CD4-positive, alpha-beta T cell (primary cell): ENCODE measurements at regions of chr18 and their contacts with region 1.

Region 1: GRCh38 chr18:59899298-59900221 is at the start of gene PMAIP1:
- DNase-seq: peak; percentile 57 to 93 (median 78)
- ATAC-seq: peak; percentile 68
- H3K4me3 ChIP-seq: peak within 1 kb of the TSS; percentile 91
- H3K4me3 Mint-ChIP-seq: peak within 1 kb of the TSS; percentile 98
- H3K27ac ChIP-seq: peak within 1 kb of the TSS; percentile 78 to 87
- H3K27ac Mint-ChIP-seq: peak within 1 kb of the TSS; percentile 93
- H3K4me1 ChIP-seq: peaks cover 28% of the 10 kb centered on the region
- H3K4me1 Mint-ChIP-seq: peaks cover 40% of the 10 kb centered on the region
- H3K27me3 ChIP-seq: no peaks in the 10 kb centered on the region
- H3K27me3 Mint-ChIP-seq: no peaks in the 10 kb centered on the region
- CTCF ChIP-seq: no peak
- total RNA-seq, gene PMAIP1: 100 to 101 TPM

Region 2: DNA sequence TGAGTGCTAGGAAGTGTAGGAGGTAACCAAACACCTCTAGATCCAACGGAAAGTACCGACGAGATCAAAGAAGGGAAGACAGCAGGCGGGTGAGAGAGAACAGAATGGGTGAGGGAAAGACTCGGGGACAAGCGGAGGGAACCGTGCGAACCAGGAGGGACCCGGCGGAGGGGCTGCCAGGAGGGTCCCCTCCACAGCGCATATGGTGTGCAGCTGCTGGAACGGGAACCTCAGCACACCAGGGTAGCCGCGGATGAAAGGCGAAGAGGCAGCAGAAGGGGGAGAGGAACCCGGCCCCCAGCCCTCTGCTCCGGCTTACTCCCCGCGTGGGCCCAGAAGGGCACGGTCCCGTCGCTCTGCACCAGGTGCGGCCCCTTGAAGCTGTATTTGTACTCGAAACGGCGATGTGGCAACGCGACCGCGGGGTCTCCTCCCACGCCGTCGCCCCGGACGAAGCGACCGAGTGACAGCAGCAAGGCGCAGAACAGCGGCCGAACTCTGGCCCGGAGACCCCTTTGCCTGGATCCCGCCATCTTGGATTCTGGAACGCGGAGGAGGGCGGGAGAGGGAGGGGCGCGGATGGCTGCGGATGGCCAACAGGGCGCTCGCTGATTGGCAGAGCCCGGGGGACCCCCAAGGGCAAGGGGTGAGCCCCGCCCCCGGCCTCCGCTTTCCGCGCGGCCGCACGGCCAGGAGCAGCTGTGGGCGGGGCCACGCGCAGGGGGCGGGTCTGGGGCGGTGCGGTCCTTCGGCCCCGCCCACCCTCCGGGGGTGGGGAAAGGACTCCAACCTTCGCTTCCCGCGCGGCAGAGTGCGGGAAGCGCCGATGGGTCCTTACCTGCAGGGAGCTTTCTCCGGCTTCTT is 540.6 kb before region 1 on chr18 and contains the start of gene LMAN1:
- CTCF ChIA-PET with region 1: no interaction called
- POLR2A ChIA-PET with region 1: interaction called, 3 read pairs
- intact Hi-C with region 1: loop called in 1 of 2 experiments (anchors 10 kb)
- DNase-seq: peak; percentile 76 to 95 (median 88)
- ATAC-seq: peak; percentile 75
- H3K4me3 ChIP-seq: peak within 1 kb of the TSS; percentile 85
- H3K4me3 Mint-ChIP-seq: peak within 1 kb of the TSS; percentile 92
- H3K27ac ChIP-seq: peak within 1 kb of the TSS; percentile 83 to 92
- H3K27ac Mint-ChIP-seq: peak within 1 kb of the TSS; percentile 81
- H3K4me1 ChIP-seq: peaks cover 14% of the 10 kb centered on the region
- H3K4me1 Mint-ChIP-seq: peaks cover 46% of the 10 kb centered on the region
- H3K27me3 ChIP-seq: no peaks in the 10 kb centered on the region
- H3K27me3 Mint-ChIP-seq: no peaks in the 10 kb centered on the region
- CTCF ChIP-seq: no peak
- total RNA-seq, gene LMAN1: 23.9 to 26.1 TPM

Region 3: GRCh38 chr18:59846814-59847490 is 52.6 kb before region 1 on chr18:
- CTCF ChIA-PET with region 1: no interaction called
- POLR2A ChIA-PET with region 1: no interaction called
- intact Hi-C with region 1: no loop called
- DNase-seq: peak in 2 of 14 experiments; percentile 13 to 32
- ATAC-seq: no peak
- H3K4me3 ChIP-seq: no peak overlapping the region
- H3K4me3 Mint-ChIP-seq: no peak overlapping the region
- H3K27ac ChIP-seq: no peak overlapping the region
- H3K27ac Mint-ChIP-seq: no peak overlapping the region
- H3K4me1 ChIP-seq: peaks cover 5% of the 10 kb centered on the region
- H3K4me1 Mint-ChIP-seq: peaks cover 5% of the 10 kb centered on the region
- H3K27me3 ChIP-seq: no peaks in the 10 kb centered on the region
- H3K27me3 Mint-ChIP-seq: no peaks in the 10 kb centered on the region
- CTCF ChIP-seq: no peak

Region 4: GRCh38 chr18:59861963-59862819 is 37.4 kb before region 1 on chr18:
- CTCF ChIA-PET with region 1: no interaction called
- POLR2A ChIA-PET with region 1: no interaction called
- intact Hi-C with region 1: no loop called
- DNase-seq: no peak
- ATAC-seq: no peak
- H3K4me3 ChIP-seq: no peak overlapping the region
- H3K4me3 Mint-ChIP-seq: no peak overlapping the region
- H3K27ac ChIP-seq: no peak overlapping the region
- H3K27ac Mint-ChIP-seq: no peak overlapping the region
- H3K4me1 ChIP-seq: no peaks in the 10 kb centered on the region
- H3K4me1 Mint-ChIP-seq: no peaks in the 10 kb centered on the region
- H3K27me3 ChIP-seq: no peaks in the 10 kb centered on the region
- H3K27me3 Mint-ChIP-seq: no peaks in the 10 kb centered on the region
- CTCF ChIP-seq: no peak

Region 5: DNA sequence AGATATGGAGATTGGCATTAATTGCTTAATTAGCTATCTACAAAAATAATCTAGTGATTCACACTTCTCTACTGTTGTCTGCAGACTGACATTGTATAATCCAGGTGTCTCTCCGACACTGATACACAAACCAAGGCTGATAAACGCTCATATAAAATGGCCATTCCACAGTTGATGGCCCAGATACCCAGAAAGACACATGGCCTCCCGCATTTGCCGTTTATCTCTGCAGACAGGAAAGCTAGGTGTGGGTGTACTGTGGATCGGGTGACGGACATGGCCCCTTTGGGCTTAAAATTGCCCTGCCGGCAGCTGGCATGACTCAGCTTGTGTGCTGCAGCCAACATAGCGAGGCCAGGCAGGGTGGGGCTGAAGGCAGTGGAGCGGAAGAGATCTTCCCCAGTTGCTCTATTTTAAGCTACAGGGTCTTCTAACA is 18.8 kb after region 1 on chr18:
- CTCF ChIA-PET with region 1: no interaction called
- POLR2A ChIA-PET with region 1: no interaction called
- intact Hi-C with region 1: no loop called
- DNase-seq: peak in 2 of 14 experiments; percentile 20 to 34
- ATAC-seq: no peak
- H3K4me3 ChIP-seq: no peak overlapping the region
- H3K4me3 Mint-ChIP-seq: no peak overlapping the region
- H3K27ac ChIP-seq: no peak overlapping the region
- H3K27ac Mint-ChIP-seq: no peak overlapping the region
- H3K4me1 ChIP-seq: peaks cover 8% of the 10 kb centered on the region
- H3K4me1 Mint-ChIP-seq: peaks cover 12% of the 10 kb centered on the region
- H3K27me3 ChIP-seq: no peaks in the 10 kb centered on the region
- H3K27me3 Mint-ChIP-seq: no peaks in the 10 kb centered on the region
- CTCF ChIP-seq: no peak

Region 6: DNA sequence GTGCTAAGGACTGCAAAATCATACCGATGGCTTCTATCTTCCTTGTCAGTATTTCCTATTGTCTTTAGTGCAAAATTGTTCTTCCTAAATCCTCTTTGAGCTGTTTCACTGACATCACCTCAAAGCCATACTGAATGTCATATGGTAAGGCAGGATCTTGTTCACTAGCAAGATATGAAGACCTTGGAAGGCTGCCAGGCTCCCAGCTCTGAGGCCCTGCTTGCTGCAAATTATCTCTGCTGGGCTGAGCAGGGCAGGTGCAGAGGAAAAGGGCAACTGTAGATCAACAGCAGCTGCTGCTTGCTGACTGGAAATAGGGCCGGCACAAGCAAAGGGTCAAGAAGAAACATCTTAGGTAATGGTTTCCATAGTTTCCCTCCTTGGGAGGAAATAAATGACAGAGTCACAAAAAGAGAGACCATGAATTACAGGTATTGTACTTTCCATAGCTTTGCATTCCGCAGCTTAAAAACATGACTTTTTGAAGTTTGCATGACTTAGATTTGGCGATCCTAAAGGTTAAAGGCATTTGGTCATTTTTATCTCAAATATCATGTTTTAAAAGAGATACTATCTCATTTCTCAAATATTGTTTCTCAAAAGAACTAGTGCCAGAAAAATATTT is 58.5 kb after region 1 on chr18:
- CTCF ChIA-PET with region 1: no interaction called
- POLR2A ChIA-PET with region 1: no interaction called
- intact Hi-C with region 1: loop called in 1 of 2 experiments (anchors 10 kb)
- DNase-seq: peak in 1 of 14 experiments; percentile 16
- ATAC-seq: no peak
- H3K4me3 ChIP-seq: no peak overlapping the region
- H3K4me3 Mint-ChIP-seq: no peak overlapping the region
- H3K27ac ChIP-seq: no peak overlapping the region
- H3K27ac Mint-ChIP-seq: no peak overlapping the region
- H3K4me1 ChIP-seq: no peaks in the 10 kb centered on the region
- H3K4me1 Mint-ChIP-seq: peaks cover 7% of the 10 kb centered on the region
- H3K27me3 ChIP-seq: no peaks in the 10 kb centered on the region
- H3K27me3 Mint-ChIP-seq: no peaks in the 10 kb centered on the region
- CTCF ChIP-seq: no peak